ENCODE measurements at regions of chr19 and their contacts with region 1.

Region 1: DNA sequence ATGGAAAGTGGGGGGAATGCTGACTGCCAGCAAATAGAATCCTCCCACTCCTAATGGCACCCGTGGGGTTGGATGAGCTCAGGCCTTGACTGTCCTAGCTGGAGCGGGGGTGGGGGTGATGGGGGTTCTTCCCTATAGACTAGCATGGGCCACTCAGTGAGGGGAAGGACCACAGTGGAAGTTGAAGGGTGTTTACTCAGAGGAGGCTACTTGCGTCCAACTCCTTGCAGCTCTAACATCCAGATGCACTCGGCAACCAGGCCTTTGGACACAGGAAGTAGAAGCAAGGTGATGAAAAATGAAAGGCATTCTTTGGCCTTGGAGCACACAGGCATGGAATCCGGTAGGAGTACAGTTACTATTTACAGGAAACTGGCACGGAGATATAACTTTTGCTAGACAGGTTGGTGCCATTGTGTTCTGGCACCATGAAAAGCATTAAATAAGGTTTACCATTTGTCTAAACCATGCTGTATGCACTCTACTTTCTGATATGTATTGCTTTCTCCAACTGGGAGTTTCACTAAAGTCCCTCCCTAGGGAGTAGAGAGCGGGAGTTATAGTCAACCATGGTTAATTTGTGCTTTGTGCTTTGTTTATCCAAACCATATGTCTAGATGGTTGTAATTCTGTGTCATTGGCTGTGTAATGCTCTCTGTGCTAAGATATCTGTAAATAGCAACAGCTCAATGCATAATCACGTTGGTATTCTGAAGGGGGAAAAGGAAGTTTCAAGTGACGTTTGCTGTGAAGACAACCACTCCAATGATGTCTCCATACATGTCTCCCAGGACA is 125.3 kb downstream of the TSHZ3 start:
- DNase-seq: no peak
- H3K4me3 Mint-ChIP-seq: no peak overlapping the region
- H3K27ac Mint-ChIP-seq: no peak overlapping the region
- H3K4me1 Mint-ChIP-seq: peaks cover 18% of the 10 kb centered on the region
- H3K27me3 Mint-ChIP-seq: peaks cover 2% of the 10 kb centered on the region

Region 2: GRCh38 chr19:31211088-31211487 is 12.8 kb before region 1 on chr19:
- CTCF ChIA-PET with region 1: no interaction called
- POLR2A ChIA-PET with region 1: interaction called, 16 read pairs
- DNase-seq: no peak
- H3K4me3 Mint-ChIP-seq: no peak overlapping the region
- H3K27ac Mint-ChIP-seq: no peak overlapping the region
- H3K4me1 Mint-ChIP-seq: peaks cover 23% of the 10 kb centered on the region
- H3K27me3 Mint-ChIP-seq: peaks cover under 1% of the 10 kb centered on the region

Measured in activated CD4-positive, alpha-beta T cell treated with anti-CD3 and anti-CD28 coated beads, Interleukin-2, amount 10 ng/mL, durations not matched to agents 7 days and 5 days (primary cell).